Caco-2 (cell line): ENCODE measurements at regions of chrX and their contacts with region 1.

Region 1: GRCh38 chrX:125398959-125399440 is 79.3 kb downstream of the TEX13C start:
- DNase-seq: no peak
- H3K4me3 ChIP-seq: no peak overlapping the region
- H3K4me3 Mint-ChIP-seq: no peak overlapping the region
- H3K27ac Mint-ChIP-seq: no peak overlapping the region
- H3K4me1 ChIP-seq: peaks cover 5% of the 10 kb centered on the region; the same call in 1 of the 2 replicates
- H3K4me1 Mint-ChIP-seq: no peaks in the 10 kb centered on the region
- H3K27me3 ChIP-seq: no peaks in the 10 kb centered on the region
- H3K27me3 Mint-ChIP-seq: no peaks in the 10 kb centered on the region
- CTCF ChIP-seq: no peak

Region 2: GRCh38 chrX:124611127-124611526 is 787.9 kb before region 1 on chrX:
- CTCF ChIA-PET with region 1: no interaction called
- POLR2A ChIA-PET with region 1: no interaction called
- intact Hi-C with region 1: loop called (anchors 5 kb)
- DNase-seq: no peak
- H3K4me3 ChIP-seq: no peak overlapping the region
- H3K4me3 Mint-ChIP-seq: no peak overlapping the region
- H3K27ac Mint-ChIP-seq: no peak overlapping the region
- H3K4me1 ChIP-seq: no peaks in the 10 kb centered on the region
- H3K4me1 Mint-ChIP-seq: no peaks in the 10 kb centered on the region
- H3K27me3 ChIP-seq: no peaks in the 10 kb centered on the region
- H3K27me3 Mint-ChIP-seq: no peaks in the 10 kb centered on the region
- CTCF ChIP-seq: no peak